ENCODE measurements at regions of chr5 and their contacts with region 1.

Region 1: GRCh38 chr5:68287976-68288706 is 72.6 kb downstream of the PIK3R1 start:
- DNase-seq: peak; percentile 77
- ATAC-seq: peak; percentile 85
- H3K4me3 ChIP-seq: peak overlapping the region; percentile 77
- H3K27ac ChIP-seq: peak overlapping the region; percentile 94
- H3K4me1 ChIP-seq: peaks cover 53% of the 10 kb centered on the region
- H3K27me3 ChIP-seq: no peaks in the 10 kb centered on the region
- CTCF ChIP-seq: no peak
- EP300 ChIP-seq: peak; percentile 16 to 52; a peak in 1 of 4 replicates
- POLR2A ChIP-seq: peak; percentile 78
- RAD21 ChIP-seq: 0 out of 2 replicates have a peak, but pooled peaks have one; percentile 9

Region 2: GRCh38 chr5:68110264-68110663 is 177.9 kb before region 1 on chr5:
- CTCF ChIA-PET with region 1: no interaction called
- POLR2A ChIA-PET with region 1: no interaction called
- RAD21 ChIA-PET with region 1: no interaction called
- SMC1A ChIA-PET with region 1: no interaction called
- in situ Hi-C with region 1: no loop called
- intact Hi-C with region 1: no loop called
- DNase-seq: no peak
- ATAC-seq: no peak
- H3K4me3 ChIP-seq: no peak overlapping the region
- H3K27ac ChIP-seq: no peak overlapping the region
- H3K4me1 ChIP-seq: no peaks in the 10 kb centered on the region
- H3K27me3 ChIP-seq: no peaks in the 10 kb centered on the region
- CTCF ChIP-seq: no peak
- EP300 ChIP-seq: no peak
- POLR2A ChIP-seq: no peak
- RAD21 ChIP-seq: no peak

Region 3: GRCh38 chr5:68215208-68215897 is 72.8 kb before region 1 on chr5 and contains the start of gene PIK3R1:
- CTCF ChIA-PET with region 1: interaction called, 9 read pairs
- POLR2A ChIA-PET with region 1: interaction called, 3 read pairs
- RAD21 ChIA-PET with region 1: interaction called, 9 read pairs
- SMC1A ChIA-PET with region 1: interaction called, 12 read pairs
- in situ Hi-C with region 1: no loop called
- intact Hi-C with region 1: no loop called
- DNase-seq: peak; percentile 74
- ATAC-seq: peak; percentile 87
- H3K4me3 ChIP-seq: peak within 1 kb of the TSS; percentile 93
- H3K27ac ChIP-seq: peak within 1 kb of the TSS; percentile 82
- H3K4me1 ChIP-seq: peaks cover 4% of the 10 kb centered on the region; the same call in 1 of the 2 replicates
- H3K27me3 ChIP-seq: no peaks in the 10 kb centered on the region
- CTCF ChIP-seq: peak in 2 of 3 experiments; percentile 26; a peak in 2 of 6 replicates
- EP300 ChIP-seq: 0 out of 4 replicates have a peak, but pooled peaks of 1 of the 2 experiments have one; percentile 31
- POLR2A ChIP-seq: peak; percentile 94
- RAD21 ChIP-seq: peak; percentile 25; the same call in 1 of the 2 replicates
- polyA plus RNA-seq, gene PIK3R1: 7.8 to 8.0 TPM

Region 4: DNA sequence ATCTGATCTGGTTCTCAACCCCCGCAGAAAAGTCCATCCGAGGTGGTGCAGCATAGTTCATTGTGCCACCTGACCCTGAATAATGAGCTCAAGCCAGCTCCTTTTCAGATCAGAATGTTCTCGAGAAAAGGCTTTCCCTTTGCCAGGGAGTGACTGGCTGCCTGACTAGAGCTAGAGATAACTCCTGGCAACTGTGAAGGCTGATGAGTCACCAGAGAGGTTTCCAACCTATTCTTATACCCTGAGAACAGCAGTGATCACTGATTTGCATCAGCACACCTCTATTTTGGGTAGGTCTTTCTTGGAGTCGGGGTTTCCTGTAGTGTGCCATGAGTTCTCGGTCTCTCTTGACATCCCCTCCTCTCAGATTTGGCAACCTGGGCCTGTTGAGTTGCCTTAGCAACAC is 55.3 kb after region 1 on chr5:
- CTCF ChIA-PET with region 1: interaction called, 3 read pairs
- POLR2A ChIA-PET with region 1: interaction called, 3 read pairs
- RAD21 ChIA-PET with region 1: interaction called, 7 read pairs
- SMC1A ChIA-PET with region 1: interaction called, 20 read pairs
- in situ Hi-C with region 1: no loop called
- intact Hi-C with region 1: no loop called
- DNase-seq: peak; percentile 55
- ATAC-seq: peak; percentile 83
- H3K4me3 ChIP-seq: no peak overlapping the region
- H3K27ac ChIP-seq: no peak overlapping the region
- H3K4me1 ChIP-seq: peaks cover 21% of the 10 kb centered on the region
- H3K27me3 ChIP-seq: no peaks in the 10 kb centered on the region
- CTCF ChIP-seq: no peak
- EP300 ChIP-seq: no peak
- POLR2A ChIP-seq: no peak
- RAD21 ChIP-seq: no peak

Region 5: DNA sequence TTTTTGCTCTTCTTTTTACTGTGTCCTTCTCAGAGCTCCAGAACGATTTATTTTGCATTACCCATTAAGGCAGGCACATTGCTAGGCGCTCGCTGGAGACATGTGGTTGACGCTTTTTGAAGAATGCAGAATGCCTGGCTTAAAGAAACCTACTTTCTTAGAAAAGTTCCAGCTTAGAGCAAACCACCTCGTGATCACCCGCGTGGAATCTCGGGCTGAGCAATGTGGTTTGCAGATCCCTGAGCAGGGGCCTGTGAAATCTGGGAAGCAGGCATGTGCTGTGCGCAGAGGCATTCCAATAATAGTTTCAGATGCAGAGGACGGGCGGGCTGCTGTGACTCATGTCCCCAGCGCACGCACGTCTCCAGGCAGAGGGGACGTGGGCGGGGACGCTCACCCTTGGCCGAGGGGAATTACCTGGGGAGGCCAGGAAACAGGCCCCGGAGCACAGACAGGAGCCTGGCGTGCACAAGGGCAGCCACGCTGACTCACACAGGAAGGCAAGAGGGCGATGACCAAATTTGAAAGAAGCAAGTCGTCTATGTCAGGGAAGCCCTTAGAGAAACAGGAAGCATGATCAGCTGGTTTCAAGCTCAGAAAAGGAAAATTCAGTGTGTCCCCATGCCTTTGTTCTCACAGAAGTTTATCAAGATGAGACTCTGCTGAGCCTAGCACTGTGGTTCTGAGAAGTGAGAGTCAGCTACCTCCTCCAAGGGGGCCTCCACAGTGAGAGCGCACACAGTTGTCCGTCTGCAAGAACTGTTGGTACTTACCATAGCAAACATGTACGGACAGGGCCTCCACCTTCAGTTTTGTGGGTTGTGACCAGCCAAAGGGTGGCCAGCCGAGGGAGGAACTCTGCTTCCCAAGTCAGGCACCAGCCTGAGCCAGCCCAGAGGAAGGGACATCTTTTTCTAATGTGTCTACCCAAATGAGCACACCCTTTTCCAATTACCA is 146.1 kb after region 1 on chr5:
- CTCF ChIA-PET with region 1: interaction called, 63 read pairs
- POLR2A ChIA-PET with region 1: interaction called, 28 read pairs
- RAD21 ChIA-PET with region 1: interaction called, 185 read pairs
- SMC1A ChIA-PET with region 1: interaction called, 116 read pairs
- in situ Hi-C with region 1: no loop called
- intact Hi-C with region 1: loop called (anchors 1 kb)
- DNase-seq: peak; percentile 99
- ATAC-seq: peak; percentile 96
- H3K4me3 ChIP-seq: no peak overlapping the region
- H3K27ac ChIP-seq: peak overlapping the region; percentile 97
- H3K4me1 ChIP-seq: peaks cover 58% of the 10 kb centered on the region
- H3K27me3 ChIP-seq: no peaks in the 10 kb centered on the region
- CTCF ChIP-seq: no peak
- EP300 ChIP-seq: peak; percentile 72 to 82; a peak in 3 of 4 replicates
- POLR2A ChIP-seq: peak; percentile 24; the same call in 1 of the 2 replicates
- RAD21 ChIP-seq: peak; percentile 33

Region 6: DNA sequence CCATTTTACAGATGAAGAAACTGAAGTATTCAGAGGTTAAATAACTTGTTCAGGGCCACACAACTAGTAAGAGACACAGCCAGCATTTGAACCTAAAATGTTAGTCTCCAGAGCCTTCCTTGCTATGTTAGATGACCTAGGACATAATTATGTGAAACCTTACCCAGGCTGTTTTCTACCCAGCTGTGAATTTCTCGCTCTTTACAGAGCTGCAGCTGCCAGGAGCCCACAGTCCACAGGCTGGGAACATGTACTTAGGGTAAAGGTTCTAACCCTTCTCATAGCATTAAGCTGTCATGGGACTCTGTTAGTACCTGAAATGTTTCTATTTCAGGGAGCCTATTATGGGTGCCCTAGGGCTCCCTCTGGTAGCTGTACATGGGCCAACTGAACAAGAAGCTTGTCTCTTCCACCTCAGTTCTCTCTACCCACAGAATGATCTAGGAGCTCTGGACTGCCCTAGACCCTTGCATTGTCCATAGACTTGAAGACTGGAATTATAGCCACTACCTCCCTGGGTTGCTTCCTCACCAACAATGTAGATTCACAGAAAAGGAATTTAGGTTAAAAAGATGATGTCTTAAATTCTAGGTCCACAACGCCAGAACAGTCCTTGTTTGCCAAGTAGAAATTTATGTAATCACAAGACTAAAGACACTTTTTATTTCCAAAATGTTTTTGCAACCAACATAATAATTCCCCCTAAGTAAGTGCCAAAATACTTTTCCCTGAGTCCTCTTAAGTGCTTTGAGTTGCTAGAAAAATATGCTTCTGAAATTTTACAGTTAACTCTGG is 190.4 kb after region 1 on chr5:
- CTCF ChIA-PET with region 1: interaction called, 11 read pairs
- POLR2A ChIA-PET with region 1: no interaction called
- RAD21 ChIA-PET with region 1: interaction called, 20 read pairs
- SMC1A ChIA-PET with region 1: interaction called, 4 read pairs
- in situ Hi-C with region 1: no loop called
- intact Hi-C with region 1: no loop called
- DNase-seq: no peak
- ATAC-seq: no peak
- H3K4me3 ChIP-seq: no peak overlapping the region
- H3K27ac ChIP-seq: no peak overlapping the region
- H3K4me1 ChIP-seq: no peaks in the 10 kb centered on the region
- H3K27me3 ChIP-seq: no peaks in the 10 kb centered on the region
- CTCF ChIP-seq: no peak
- EP300 ChIP-seq: no peak
- POLR2A ChIP-seq: no peak
- RAD21 ChIP-seq: no peak

Region 7: DNA sequence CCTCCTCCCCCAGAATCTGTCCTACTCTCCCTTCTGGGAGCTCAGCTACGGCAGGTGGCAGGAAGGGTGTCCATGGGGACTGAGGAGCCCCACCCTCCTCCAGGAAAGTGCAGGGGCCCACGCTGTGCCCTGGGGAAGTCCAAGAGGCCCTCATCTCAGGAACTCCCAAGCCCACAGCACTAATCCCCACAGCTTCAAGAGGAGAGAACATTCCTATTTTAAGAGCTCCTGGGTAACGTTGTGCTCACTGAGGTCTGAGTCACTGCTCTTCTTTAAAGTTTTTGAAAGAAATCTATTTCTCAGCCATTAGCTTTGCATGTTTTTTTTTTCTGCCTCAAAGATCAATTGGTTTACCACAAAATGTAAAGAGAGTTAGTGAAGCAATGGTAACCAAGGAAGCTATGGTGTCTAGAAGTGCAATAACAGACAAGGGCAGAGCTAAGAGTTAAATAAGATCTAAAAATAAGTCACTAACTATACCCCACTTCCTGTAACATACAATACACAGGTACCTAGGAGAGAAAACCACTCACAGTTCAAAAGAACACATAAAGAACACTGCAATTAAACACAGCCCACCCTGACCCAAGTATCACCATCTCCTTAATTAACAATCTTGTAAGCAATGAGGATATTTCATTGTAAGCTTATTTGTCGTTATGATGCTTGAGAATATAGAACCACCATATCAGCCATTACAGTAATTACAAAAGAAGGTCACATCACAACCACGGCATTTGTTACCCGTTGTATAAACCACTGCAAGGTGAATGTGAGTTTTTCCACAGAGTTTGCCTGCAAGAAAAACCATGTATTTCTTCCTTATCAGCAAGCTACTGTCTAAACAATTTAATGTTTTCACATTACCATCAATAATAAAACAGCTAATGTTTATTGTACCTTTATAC is 423.4 kb after region 1 on chr5:
- CTCF ChIA-PET with region 1: interaction called, 6 read pairs
- POLR2A ChIA-PET with region 1: no interaction called
- RAD21 ChIA-PET with region 1: interaction called, 6 read pairs
- SMC1A ChIA-PET with region 1: interaction called, 14 read pairs
- in situ Hi-C with region 1: no loop called
- intact Hi-C with region 1: no loop called
- DNase-seq: peak; percentile 72
- ATAC-seq: peak; percentile 93
- H3K4me3 ChIP-seq: peak overlapping the region; percentile 14; the same call in 1 of the 2 replicates
- H3K27ac ChIP-seq: peak overlapping the region; percentile 61
- H3K4me1 ChIP-seq: peaks cover 21% of the 10 kb centered on the region
- H3K27me3 ChIP-seq: no peaks in the 10 kb centered on the region
- CTCF ChIP-seq: no peak
- EP300 ChIP-seq: peak in 1 of 2 experiments; percentile 66; a peak in 2 of 4 replicates
- POLR2A ChIP-seq: no peak
- RAD21 ChIP-seq: 0 out of 2 replicates have a peak, but pooled peaks have one; percentile 27

Measured in GM12878 (cell line).